Posterior cingulate gyrus (tissue), 11 donors: ENCODE measurements at regions of chr5 and their contacts with region 1.

Region 1: GRCh38 chr5:60843936-60844905 is at the start of gene ELOVL7:
- DNase-seq: peak; percentile 61 to 96 (median 78)

Region 2: DNA sequence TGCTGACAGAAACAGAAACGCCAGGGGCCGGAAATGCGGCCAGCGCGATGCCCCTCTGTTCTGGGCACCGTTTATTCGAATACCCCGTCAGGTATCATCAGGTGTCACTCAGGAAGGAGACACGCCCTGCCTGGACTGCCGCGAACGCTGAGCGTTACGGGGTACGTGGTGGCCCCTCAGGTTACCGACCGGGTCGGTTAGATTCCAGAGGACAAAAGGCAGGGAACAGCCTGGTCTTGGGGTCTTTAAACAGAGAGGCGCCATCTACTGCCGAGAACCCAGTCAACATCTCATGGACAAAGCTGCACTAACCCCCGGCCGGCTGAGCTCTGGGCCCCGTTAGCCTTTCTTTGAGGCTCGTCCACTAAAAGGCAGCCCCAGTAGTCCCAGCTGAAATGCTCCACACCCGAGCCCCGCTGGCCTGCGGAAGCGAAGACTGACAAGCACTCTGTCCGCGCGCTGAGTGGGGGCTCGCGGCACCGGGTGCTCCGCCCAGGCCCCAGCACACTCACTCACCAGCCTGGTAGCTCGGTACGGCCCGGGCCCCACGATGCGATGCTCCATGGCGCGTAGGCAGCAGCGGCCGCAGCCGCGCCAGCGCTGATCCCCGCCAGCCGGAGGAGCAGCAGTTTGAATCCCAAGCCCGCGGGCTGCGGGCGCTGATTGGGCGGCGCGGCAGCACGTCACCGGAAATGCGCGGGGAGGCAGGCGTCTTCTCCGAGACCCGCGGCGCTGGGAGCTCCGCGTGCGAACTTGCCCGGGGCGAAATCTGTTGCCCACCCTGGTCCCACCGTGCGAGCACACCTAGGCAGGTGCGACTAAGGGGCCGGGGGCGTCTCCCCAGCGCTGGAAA is 144.5 kb before region 1 on chr5 and contains the start of gene DEPDC1B:
- intact Hi-C with region 1: loop called (anchors 10 kb)
- DNase-seq: peak; percentile 80 to 98 (median 89)

Region 3: GRCh38 chr5:60794691-60795090 is 49.5 kb before region 1 on chr5:
- intact Hi-C with region 1: no loop called
- DNase-seq: no peak